ENCODE measurements at regions of chr7 and their contacts with region 1.

Region 1: GRCh38 chr7:94095316-94096009 is 91.3 kb upstream of the BET1 start:
- DNase-seq: no peak
- ATAC-seq: no peak
- H3K4me3 ChIP-seq: no peak overlapping the region
- H3K27ac ChIP-seq: no peak overlapping the region
- H3K4me1 ChIP-seq: peaks cover 0 to 1% of the 10 kb centered on the region in 2 donors
- H3K27me3 ChIP-seq: no peaks in the 10 kb centered on the region

Region 2: GRCh38 chr7:93715234-93715633 is 380.2 kb before region 1 on chr7:
- intact Hi-C with region 1: loop called in 1 of 2 experiments (anchors 10 kb)
- DNase-seq: peak; percentile 58 to 81
- ATAC-seq: no peak
- H3K4me3 ChIP-seq: no peak overlapping the region
- H3K27ac ChIP-seq: no peak overlapping the region
- H3K4me1 ChIP-seq: no peaks in the 10 kb centered on the region
- H3K27me3 ChIP-seq: no peaks in the 10 kb centered on the region